ENCODE measurements at regions of chr17 and their contacts with region 1.

Region 1: GRCh38 chr17:76397687-76398487 is 13.5 kb downstream of the SPHK1 start:
- DNase-seq: peak; percentile 87
- H3K4me3 Mint-ChIP-seq: no peak overlapping the region
- H3K27ac Mint-ChIP-seq: no peak overlapping the region
- H3K4me1 Mint-ChIP-seq: no peaks in the 10 kb centered on the region
- H3K27me3 Mint-ChIP-seq: no peaks in the 10 kb centered on the region

Region 2: DNA sequence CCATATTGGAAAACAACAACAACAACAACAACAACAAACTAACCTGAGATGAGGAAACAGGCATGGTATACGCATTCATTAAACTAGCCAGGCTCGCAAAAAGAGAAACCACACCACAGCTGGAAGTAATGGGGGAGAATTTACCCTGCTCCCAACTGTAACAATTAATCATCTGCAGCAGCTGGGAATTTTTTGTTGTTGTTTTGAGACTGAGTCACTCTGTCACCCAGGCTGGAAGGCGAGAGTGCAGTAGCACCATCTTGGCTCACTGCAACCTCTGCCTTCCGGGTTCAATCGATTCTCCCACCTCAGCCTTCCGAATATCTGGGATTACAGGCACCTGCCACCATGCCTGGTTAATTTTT is 60.5 kb before region 1 on chr17:
- CTCF ChIA-PET with region 1: interaction called, 14 read pairs
- POLR2A ChIA-PET with region 1: no interaction called
- DNase-seq: no peak
- H3K4me3 Mint-ChIP-seq: no peak overlapping the region
- H3K27ac Mint-ChIP-seq: no peak overlapping the region
- H3K4me1 Mint-ChIP-seq: peaks cover 5% of the 10 kb centered on the region
- H3K27me3 Mint-ChIP-seq: no peaks in the 10 kb centered on the region

Region 3: GRCh38 chr17:76365256-76365903 is 32.5 kb before region 1 on chr17:
- CTCF ChIA-PET with region 1: interaction called, 12 read pairs
- POLR2A ChIA-PET with region 1: no interaction called
- DNase-seq: no peak
- H3K4me3 Mint-ChIP-seq: no peak overlapping the region
- H3K27ac Mint-ChIP-seq: no peak overlapping the region
- H3K4me1 Mint-ChIP-seq: peaks cover 2% of the 10 kb centered on the region
- H3K27me3 Mint-ChIP-seq: peaks cover 2% of the 10 kb centered on the region

Region 4: DNA sequence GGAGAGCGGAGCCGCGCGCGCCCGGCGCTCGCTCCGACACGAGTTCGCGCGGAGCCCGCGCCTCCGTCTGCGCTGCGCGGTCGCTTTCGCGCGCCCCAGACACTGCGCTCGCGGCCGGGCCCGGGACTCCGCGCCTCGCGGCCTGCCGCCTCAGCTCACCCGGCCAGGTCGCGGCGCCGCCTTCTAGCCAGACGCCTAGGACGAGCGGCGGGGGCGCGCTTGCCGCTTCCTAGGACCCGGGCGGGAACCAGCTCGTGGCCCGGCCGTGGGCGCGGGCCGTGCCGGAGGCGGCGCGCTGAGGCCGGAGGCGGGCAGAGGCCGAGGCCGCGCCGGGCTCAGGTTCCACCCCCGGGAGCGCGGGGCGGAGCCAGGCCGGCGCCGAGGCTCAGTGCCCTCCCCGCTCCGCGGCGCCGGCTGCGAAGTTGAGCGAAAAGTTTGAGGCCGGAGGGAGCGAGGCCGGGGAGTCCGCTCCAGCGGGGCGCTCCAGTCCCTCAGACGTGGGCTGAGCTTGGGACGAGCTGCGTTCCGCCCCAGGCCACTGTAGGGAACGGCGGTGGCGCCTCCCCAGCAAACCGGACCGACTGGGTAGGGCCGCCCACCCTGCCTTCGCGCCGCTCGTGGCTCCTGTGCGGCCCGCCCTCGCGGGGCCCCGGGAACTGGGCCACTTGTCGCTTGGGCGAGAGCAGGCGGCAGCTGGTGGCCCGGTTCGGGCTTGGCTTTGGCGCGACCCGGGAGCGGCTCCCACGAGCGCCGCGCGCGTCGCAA is 13.5 kb before region 1 on chr17 and contains the start of gene SPHK1:
- CTCF ChIA-PET with region 1: interaction called, 77 read pairs
- POLR2A ChIA-PET with region 1: interaction called, 22 read pairs
- DNase-seq: peak; percentile 76
- H3K4me3 Mint-ChIP-seq: peak within 1 kb of the TSS; percentile 78
- H3K27ac Mint-ChIP-seq: peak within 1 kb of the TSS; percentile 81
- H3K4me1 Mint-ChIP-seq: peaks cover 11% of the 10 kb centered on the region
- H3K27me3 Mint-ChIP-seq: no peaks in the 10 kb centered on the region
- total RNA-seq, gene SPHK1: 2.8 to 3.4 TPM

Region 5: GRCh38 chr17:76414334-76415295 is 16.7 kb after region 1 on chr17:
- CTCF ChIA-PET with region 1: interaction called, 51 read pairs
- POLR2A ChIA-PET with region 1: no interaction called
- DNase-seq: no peak
- H3K4me3 Mint-ChIP-seq: no peak overlapping the region
- H3K27ac Mint-ChIP-seq: no peak overlapping the region
- H3K4me1 Mint-ChIP-seq: no peaks in the 10 kb centered on the region
- H3K27me3 Mint-ChIP-seq: no peaks in the 10 kb centered on the region

Region 6: GRCh38 chr17:76506408-76507349 is 108.8 kb after region 1 on chr17:
- CTCF ChIA-PET with region 1: interaction called, 11 read pairs
- POLR2A ChIA-PET with region 1: interaction called, 3 read pairs
- DNase-seq: peak; percentile 90
- H3K4me3 Mint-ChIP-seq: no peak overlapping the region
- H3K27ac Mint-ChIP-seq: no peak overlapping the region
- H3K4me1 Mint-ChIP-seq: peaks cover 40% of the 10 kb centered on the region
- H3K27me3 Mint-ChIP-seq: peaks cover 8% of the 10 kb centered on the region